ENCODE measurements at regions of chr20 and their contacts with region 1.

Region 1: DNA sequence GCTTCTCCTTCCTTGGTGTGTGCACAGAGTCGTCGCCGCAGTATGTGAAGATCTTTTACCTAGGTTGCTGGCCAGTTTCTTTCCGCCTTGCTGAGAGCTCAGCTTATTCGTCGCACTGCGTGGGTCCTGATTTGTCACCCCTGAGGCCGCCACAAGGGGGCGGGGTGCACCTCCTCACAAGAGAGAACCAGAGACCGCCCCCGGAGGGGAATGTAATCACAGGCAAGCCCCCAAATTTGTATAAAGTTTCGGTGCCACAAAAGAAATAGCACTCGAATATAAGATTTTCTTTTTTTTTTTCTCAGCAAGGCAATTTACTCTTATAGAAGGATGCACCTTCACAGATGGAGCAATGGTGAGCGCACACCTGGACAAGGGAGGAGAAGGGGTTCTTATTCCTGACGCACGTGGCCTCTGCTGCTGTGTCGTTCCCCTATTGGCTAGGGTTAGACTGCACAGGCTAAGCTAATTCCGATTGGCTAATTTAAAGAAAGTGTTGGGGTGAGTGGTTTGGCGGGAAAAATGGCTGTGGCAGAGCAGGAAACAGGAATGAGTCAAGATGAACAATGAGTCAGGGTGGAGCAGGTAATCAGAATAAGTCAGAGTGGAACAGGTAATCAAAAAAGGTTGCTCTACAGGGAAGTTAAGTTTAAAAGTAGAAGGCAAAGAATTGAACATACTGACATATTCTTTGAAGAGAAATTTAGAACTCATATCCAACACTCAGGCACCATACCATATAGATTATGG is 19.5 kb downstream of the NCOA3 start:
- DNase-seq: peak in 1 of 2 experiments; percentile 92
- H3K4me3 ChIP-seq: no peak overlapping the region
- H3K27ac ChIP-seq: peak overlapping the region; percentile 50; the same call in 1 of the 2 replicates
- H3K4me1 ChIP-seq: peaks cover 0 to 7% (median 4%) of the 10 kb centered on the region in 4 experiments; a peak in 5 of 7 replicates
- H3K27me3 ChIP-seq: no peaks in the 10 kb centered on the region
- CTCF ChIP-seq: peak; percentile 59 to 92 (median 61)
- EP300 ChIP-seq: no peak
- POLR2A ChIP-seq: no peak
- RAD21 ChIP-seq: peak; percentile 69 to 77

Region 2: DNA sequence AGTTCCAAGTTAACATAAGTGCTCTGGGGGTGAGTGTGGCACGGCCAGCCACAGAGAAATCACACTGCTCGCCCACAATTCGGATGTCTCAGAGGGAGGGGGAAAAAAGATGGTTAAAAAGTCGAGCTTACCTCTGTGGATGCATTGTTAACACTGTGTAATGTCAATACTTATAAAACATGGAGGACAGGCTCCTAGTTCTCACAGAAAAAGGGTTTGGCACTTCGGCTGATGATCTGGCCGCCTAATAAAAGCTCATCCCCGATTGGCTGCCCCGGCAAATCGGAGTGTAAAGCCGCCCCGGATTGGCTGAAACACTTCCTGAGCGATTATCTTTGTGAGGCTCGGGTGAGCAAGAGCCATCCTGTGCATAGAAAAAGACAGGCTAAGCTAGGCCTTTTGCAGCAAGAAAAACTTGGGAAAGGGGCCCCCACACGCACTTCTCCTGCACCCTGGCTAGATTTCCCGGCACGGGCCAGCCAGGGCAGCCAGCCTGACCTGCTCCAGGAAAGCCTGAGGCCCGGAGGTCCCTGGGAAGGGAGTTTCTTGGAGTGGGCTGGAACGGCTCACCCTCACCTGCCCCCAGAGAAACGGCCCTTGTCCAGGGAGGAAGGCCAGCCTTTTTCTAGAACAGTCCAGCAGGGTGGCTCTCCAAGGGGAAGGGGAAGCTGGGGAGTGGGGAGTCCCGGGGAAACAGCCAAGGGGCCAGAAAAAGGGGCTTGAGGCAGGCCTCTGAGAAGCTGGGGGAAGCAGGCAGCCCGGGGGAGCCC is 164.5 kb before region 1 on chr20 and contains the start of gene ZMYND8:
- CTCF ChIA-PET with region 1: no interaction called
- POLR2A ChIA-PET with region 1: no interaction called
- DNase-seq: peak; percentile 70 to 98
- H3K4me3 ChIP-seq: peak within 1 kb of the TSS in 2 of 4 experiments; percentile 6 to 37; a peak in 5 of 8 replicates
- H3K27ac ChIP-seq: peak within 1 kb of the TSS; percentile 98
- H3K4me1 ChIP-seq: peaks cover 72 to 86% (median 79%) of the 10 kb centered on the region in 4 experiments
- H3K27me3 ChIP-seq: no peaks in the 10 kb centered on the region
- CTCF ChIP-seq: no peak
- EP300 ChIP-seq: no peak
- POLR2A ChIP-seq: no peak; a peak in 1 of 3 replicates
- RAD21 ChIP-seq: no peak
- total RNA-seq, gene ZMYND8: 163 TPM in 2 replicates

Region 3: DNA sequence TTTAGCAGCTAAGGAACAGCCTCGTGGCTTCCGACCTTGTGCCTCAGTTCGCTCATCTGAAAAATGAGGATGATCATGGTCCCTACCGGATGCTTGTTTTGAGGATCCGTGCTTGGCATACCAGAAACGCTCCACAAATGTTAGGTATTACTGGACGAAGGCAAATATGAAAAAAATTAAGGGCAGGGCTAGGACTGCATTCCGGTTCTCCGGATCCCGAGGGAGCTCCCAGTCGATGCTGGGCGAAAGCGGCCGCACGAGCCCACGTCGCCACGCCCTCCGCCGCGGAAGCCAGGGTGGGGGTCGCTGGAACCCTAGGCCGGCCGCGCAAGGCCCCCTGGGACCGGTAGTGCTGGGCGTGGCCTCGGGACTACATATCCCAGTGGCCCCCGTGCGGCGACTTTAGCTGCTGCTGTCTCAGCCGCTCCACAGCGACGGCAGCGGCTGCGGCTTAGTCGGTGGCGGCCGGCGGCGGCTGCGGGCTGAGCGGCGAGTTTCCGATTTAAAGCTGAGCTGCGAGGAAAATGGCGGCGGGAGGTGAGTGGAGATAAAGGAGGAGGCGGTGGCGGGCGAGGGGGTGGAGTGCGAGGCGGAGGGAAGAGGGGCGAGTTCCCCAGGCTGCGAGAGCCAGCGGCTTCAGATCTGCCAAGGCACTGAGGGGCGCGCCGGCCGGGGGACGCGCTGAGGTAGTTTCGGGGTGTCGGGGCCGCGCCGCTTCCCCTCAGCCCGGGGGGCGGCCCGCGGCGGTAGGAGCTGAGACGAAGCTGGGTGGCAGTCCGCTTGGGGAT is 19.6 kb before region 1 on chr20 and contains the start of gene NCOA3:
- CTCF ChIA-PET with region 1: interaction called, 16 read pairs
- POLR2A ChIA-PET with region 1: interaction called, 32 read pairs
- DNase-seq: peak; percentile 78 to 97
- H3K4me3 ChIP-seq: peak within 1 kb of the TSS; percentile 74 to 89 (median 84)
- H3K27ac ChIP-seq: peak within 1 kb of the TSS; percentile 60; the same call in 1 of the 2 replicates
- H3K4me1 ChIP-seq: peaks cover 0 to 9% (median 2%) of the 10 kb centered on the region in 4 experiments; a peak in 4 of 7 replicates
- H3K27me3 ChIP-seq: no peaks in the 10 kb centered on the region
- CTCF ChIP-seq: no peak; a peak in 1 of 4 replicates
- EP300 ChIP-seq: peak in 1 of 2 experiments; percentile 77; a peak in 1 of 3 replicates
- POLR2A ChIP-seq: peak; percentile 94 to 96
- RAD21 ChIP-seq: peak in 1 of 2 experiments; percentile 15; a peak in 2 of 4 replicates
- total RNA-seq, gene NCOA3: 21.1 and 24.7 TPM in 2 replicates

Region 4: DNA sequence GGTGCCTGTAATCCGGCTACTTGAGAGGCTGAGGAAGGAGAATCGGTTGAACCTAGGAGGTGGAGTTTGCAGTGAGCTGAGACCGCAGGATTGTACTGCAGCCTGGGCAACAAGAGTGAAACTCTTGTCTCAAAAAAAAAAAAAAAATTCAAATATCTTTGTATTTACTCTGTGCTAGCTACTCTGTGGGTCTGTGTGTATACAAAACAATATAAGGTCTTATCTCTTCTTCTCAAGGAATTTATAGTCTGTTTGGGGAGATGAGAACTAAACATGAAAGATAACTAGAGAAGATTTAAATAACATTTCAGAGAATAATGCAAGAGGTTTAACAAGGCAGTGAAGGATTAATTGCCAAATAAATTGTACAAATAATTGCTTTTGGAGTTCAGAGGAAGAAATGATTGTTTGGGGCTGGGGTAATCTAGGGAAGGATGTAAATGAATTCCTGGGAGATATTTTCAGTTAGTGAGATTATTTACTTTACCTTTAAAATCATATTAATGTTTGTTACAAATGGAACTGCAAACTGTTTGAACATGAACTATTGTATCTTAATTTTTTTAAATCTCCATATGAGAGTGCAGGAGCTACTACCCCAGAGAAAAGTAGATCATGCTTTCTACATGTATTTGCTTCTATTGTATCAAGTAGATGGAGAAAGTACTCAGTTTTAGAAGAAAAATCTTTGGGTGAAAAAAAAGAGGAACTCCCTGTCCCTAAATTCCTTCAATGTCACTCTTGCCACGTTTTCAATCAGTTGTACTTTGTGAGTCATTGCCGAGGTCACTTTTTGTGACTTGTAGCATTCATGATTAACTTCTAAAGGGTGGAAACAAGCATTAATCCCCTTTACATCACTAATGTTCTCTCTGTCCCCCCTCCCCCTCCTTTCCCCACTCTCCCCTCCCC is 19.5 kb after region 1 on chr20:
- CTCF ChIA-PET with region 1: interaction called, 12 read pairs
- POLR2A ChIA-PET with region 1: interaction called, 7 read pairs
- DNase-seq: no peak
- H3K4me3 ChIP-seq: no peak overlapping the region
- H3K27ac ChIP-seq: no peak overlapping the region
- H3K4me1 ChIP-seq: peaks cover 0 to 9% (median 1%) of the 10 kb centered on the region in 4 experiments; a peak in 5 of 7 replicates
- H3K27me3 ChIP-seq: no peaks in the 10 kb centered on the region
- CTCF ChIP-seq: no peak
- EP300 ChIP-seq: no peak
- POLR2A ChIP-seq: no peak
- RAD21 ChIP-seq: no peak

Region 5: GRCh38 chr20:47578543-47578942 is 57.3 kb after region 1 on chr20:
- CTCF ChIA-PET with region 1: interaction called, 10 read pairs
- POLR2A ChIA-PET with region 1: no interaction called
- DNase-seq: no peak
- H3K4me3 ChIP-seq: no peak overlapping the region
- H3K27ac ChIP-seq: no peak overlapping the region
- H3K4me1 ChIP-seq: peaks cover 0 to 15% (median 14%) of the 10 kb centered on the region in 4 experiments; a peak in 5 of 7 replicates
- H3K27me3 ChIP-seq: no peaks in the 10 kb centered on the region
- CTCF ChIP-seq: no peak
- EP300 ChIP-seq: no peak
- POLR2A ChIP-seq: no peak
- RAD21 ChIP-seq: no peak

Region 6: GRCh38 chr20:47620808-47621805 is 99.9 kb after region 1 on chr20:
- CTCF ChIA-PET with region 1: interaction called, 26 read pairs
- POLR2A ChIA-PET with region 1: no interaction called
- DNase-seq: no peak
- H3K4me3 ChIP-seq: no peak overlapping the region
- H3K27ac ChIP-seq: no peak overlapping the region
- H3K4me1 ChIP-seq: peaks cover 0 to 4% (median 1%) of the 10 kb centered on the region in 4 experiments; a peak in 2 of 7 replicates
- H3K27me3 ChIP-seq: no peaks in the 10 kb centered on the region
- CTCF ChIP-seq: peak in 2 of 3 experiments; percentile 39 to 50; a peak in 2 of 4 replicates
- EP300 ChIP-seq: no peak
- POLR2A ChIP-seq: no peak
- RAD21 ChIP-seq: peak; percentile 79 to 84

Region 7: DNA sequence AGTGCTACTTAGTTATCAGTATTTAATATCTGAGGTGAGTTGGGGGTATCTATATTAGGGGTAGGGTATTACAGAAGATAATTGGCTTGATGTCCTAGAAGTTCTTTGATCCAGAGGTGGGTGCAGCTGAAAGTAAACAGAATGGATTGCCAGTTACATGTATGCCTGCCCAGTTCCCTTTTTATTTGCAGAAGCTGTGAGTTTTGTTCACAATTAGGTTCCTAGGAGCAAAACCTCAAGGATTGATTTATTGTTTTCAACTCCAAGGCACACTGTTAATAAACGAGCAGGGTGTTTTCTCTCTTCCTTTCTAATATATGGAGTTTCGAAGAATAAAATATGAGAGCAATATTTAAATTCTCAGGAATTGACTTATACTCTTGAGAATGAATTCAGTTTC is 135.1 kb after region 1 on chr20:
- CTCF ChIA-PET with region 1: no interaction called
- POLR2A ChIA-PET with region 1: no interaction called
- DNase-seq: no peak
- H3K4me3 ChIP-seq: no peak overlapping the region
- H3K27ac ChIP-seq: no peak overlapping the region
- H3K4me1 ChIP-seq: peaks cover 0 to 11% (median 4%) of the 10 kb centered on the region in 4 experiments; a peak in 4 of 7 replicates
- H3K27me3 ChIP-seq: no peaks in the 10 kb centered on the region
- CTCF ChIP-seq: no peak
- EP300 ChIP-seq: no peak
- POLR2A ChIP-seq: no peak
- RAD21 ChIP-seq: no peak

Region 8: GRCh38 chr20:47944708-47945453 is 423.6 kb after region 1 on chr20:
- CTCF ChIA-PET with region 1: no interaction called
- POLR2A ChIA-PET with region 1: no interaction called
- DNase-seq: no peak
- H3K4me3 ChIP-seq: no peak overlapping the region
- H3K27ac ChIP-seq: no peak overlapping the region
- H3K4me1 ChIP-seq: no peaks in the 10 kb centered on the region
- H3K27me3 ChIP-seq: no peaks in the 10 kb centered on the region
- CTCF ChIP-seq: no peak
- EP300 ChIP-seq: no peak
- POLR2A ChIP-seq: no peak
- RAD21 ChIP-seq: no peak